Gastrocnemius medialis (tissue), 4 donors: ENCODE measurements at regions of chr2 and their contacts with region 1.

Region 1: DNA sequence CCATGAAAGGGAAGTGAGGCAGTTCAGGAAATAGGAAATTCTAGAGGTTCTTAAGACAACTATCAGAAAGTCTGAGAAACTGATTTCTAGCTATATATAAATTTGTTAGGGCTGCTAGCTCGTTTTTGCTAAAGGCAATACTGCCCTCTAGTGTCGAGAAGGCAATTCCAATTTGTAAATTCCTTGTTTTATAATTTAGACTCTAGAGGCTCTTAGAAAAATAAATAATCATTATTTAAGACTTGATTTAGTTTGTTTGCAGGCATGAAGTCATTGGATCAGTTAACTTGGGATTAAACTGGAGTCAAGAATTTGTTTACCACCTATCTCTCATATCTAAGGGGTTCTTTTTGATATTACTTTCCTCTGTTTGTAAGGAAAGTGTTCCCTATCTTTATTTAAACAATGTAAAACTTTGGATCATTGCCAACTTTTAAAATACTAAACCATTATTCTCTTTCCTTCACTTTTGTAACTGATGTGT is 66.2 kb downstream of the ACVR2A start:
- DNase-seq: no peak
- ATAC-seq: peak; percentile 33 to 61
- H3K4me3 ChIP-seq: no peak overlapping the region
- H3K27ac ChIP-seq: no peak overlapping the region
- H3K4me1 ChIP-seq: peaks cover 7 to 23% of the 10 kb centered on the region in 2 donors
- H3K27me3 ChIP-seq: no peaks in the 10 kb centered on the region
- CTCF ChIP-seq: peak; percentile 68 to 89 (median 84)
- POLR2A ChIP-seq: no peak

Region 2: DNA sequence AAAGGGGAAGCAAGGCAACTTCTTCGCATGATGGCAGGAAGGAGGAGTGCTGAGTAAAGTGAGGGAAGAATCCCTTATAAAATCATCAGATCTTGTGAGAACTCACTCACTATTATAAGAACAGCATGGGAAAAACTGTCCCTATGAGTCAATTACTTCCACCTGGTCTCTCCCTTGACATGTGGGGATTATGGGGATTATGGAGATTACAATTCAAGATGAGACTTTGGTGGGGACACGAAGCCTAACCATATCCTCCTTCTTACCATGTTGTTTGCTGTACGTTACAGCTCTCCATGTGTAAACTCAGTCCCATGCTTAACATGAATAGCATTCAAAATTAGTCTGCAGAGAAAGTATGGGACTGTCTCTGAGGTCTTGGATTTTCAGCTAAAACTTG is 1163.0 kb before region 1 on chr2:
- in situ Hi-C with region 1: loop called in 3 of 4 experiments (anchors 10 to 25 kb)
- intact Hi-C with region 1: no loop called
- DNase-seq: no peak
- ATAC-seq: no peak
- H3K4me3 ChIP-seq: no peak overlapping the region
- H3K27ac ChIP-seq: no peak overlapping the region
- H3K4me1 ChIP-seq: no peaks in the 10 kb centered on the region
- H3K27me3 ChIP-seq: no peaks in the 10 kb centered on the region
- CTCF ChIP-seq: no peak
- POLR2A ChIP-seq: no peak

Region 3: DNA sequence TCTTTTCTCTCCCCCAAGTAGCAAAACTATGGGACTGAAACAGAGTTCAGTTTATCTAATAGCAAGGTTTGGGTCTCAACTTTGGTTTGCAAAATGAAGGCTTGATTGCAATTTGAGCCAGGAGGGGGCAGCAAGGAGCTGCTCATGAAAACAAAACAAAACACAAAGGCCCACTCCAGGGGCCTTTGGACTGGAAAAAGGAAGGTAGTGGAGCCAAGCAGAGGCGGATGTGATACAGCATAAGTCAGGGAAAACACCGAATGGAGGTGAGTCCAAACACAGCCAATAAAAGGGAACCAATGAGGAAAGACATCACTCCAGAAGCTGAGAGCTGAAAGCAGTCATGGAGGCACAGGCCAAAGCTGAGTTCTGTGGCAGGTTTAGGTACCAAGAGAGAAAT is 865.9 kb before region 1 on chr2:
- in situ Hi-C with region 1: no loop called
- intact Hi-C with region 1: loop called (anchors 2 kb)
- DNase-seq: peak in 1 of 2 donors; percentile 15
- ATAC-seq: no peak
- H3K4me3 ChIP-seq: no peak overlapping the region
- H3K27ac ChIP-seq: no peak overlapping the region
- H3K4me1 ChIP-seq: no peaks in the 10 kb centered on the region
- H3K27me3 ChIP-seq: no peaks in the 10 kb centered on the region
- CTCF ChIP-seq: peak in 4 of 5 experiments; percentile 18 to 58 (median 42)
- POLR2A ChIP-seq: no peak

Region 4: GRCh38 chr2:147352264-147352663 is 558.8 kb before region 1 on chr2:
- in situ Hi-C with region 1: no loop called
- intact Hi-C with region 1: loop called (anchors 10 kb)
- DNase-seq: peak in 1 of 2 donors; percentile 11
- ATAC-seq: peak; percentile 78
- H3K4me3 ChIP-seq: no peak overlapping the region
- H3K27ac ChIP-seq: peak overlapping the region in 1 of 4 donors; percentile 9
- H3K4me1 ChIP-seq: peaks cover 12 to 13% of the 10 kb centered on the region in 2 donors
- H3K27me3 ChIP-seq: no peaks in the 10 kb centered on the region
- CTCF ChIP-seq: no peak
- POLR2A ChIP-seq: no peak

Region 5: GRCh38 chr2:147760984-147761383 is 150.0 kb before region 1 on chr2:
- in situ Hi-C with region 1: no loop called
- intact Hi-C with region 1: no loop called
- DNase-seq: no peak
- ATAC-seq: no peak
- H3K4me3 ChIP-seq: no peak overlapping the region
- H3K27ac ChIP-seq: no peak overlapping the region
- H3K4me1 ChIP-seq: no peaks in the 10 kb centered on the region
- H3K27me3 ChIP-seq: no peaks in the 10 kb centered on the region
- CTCF ChIP-seq: no peak
- POLR2A ChIP-seq: no peak

Region 6: GRCh38 chr2:147843864-147844696 is 67.0 kb before region 1 on chr2:
- in situ Hi-C with region 1: no loop called
- intact Hi-C with region 1: loop called (anchors 5 kb)
- DNase-seq: peak; percentile 83 to 85
- ATAC-seq: peak; percentile 90 to 92
- H3K4me3 ChIP-seq: peak overlapping the region; percentile 77 to 91 (median 86)
- H3K27ac ChIP-seq: peak overlapping the region; percentile 89 to 99 (median 96)
- H3K4me1 ChIP-seq: peaks cover 37 to 43% of the 10 kb centered on the region in 2 donors
- H3K27me3 ChIP-seq: no peaks in the 10 kb centered on the region
- CTCF ChIP-seq: peak in 3 of 5 experiments; percentile 10 to 31 (median 27)
- POLR2A ChIP-seq: peak; percentile 68 to 73